ENCODE measurements at regions of chr15 and their contacts with region 1.

Region 1: DNA sequence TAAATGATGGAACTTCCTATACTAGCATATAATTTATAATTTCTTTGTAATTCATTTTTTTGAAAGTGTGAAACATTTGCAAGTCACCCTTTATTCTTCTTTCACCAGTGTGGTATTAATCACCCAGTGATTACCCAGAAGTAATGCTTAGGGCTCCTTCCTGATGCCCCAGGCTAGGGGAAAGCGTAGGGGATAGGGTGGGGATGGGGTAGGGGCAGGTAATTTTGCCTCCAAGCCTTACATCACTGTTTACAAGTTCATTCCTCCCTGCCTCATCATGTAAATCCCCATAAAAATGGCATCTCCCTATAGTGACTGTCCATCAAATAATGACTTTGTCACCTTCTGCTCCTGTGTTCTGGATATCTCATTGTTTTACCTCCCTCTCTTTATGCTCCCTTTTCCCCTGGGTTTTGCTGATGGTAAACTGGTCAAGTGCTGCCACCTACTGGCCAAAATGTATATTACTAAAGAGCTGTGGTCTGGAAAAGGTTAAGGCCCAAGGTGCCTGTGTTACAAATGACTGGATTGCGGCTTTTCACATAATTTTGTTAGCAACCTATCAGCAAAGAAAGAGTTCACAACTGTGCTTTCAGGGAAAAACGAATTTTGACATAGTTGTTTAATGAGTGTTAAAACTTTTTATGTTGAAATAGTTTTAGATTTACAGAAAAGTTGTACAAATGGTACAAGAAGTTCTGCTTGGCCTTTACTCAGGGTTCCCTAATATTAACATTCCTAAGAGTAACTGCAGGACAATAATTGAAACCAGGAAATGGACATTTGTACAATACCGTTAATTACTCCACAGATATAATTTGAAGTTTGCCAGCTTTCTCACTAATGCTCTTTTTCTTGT is 54.7 kb downstream of the ONECUT1 start:
- DNase-seq: peak; percentile 88
- ATAC-seq: peak; percentile 86
- H3K4me3 ChIP-seq: no peak overlapping the region
- H3K4me3 Mint-ChIP-seq: no peak overlapping the region
- H3K27ac ChIP-seq: no peak overlapping the region
- H3K27ac Mint-ChIP-seq: no peak overlapping the region
- H3K4me1 ChIP-seq: peaks cover 12 to 14% of the 10 kb centered on the region in 2 donors
- H3K4me1 Mint-ChIP-seq: peaks cover 14% of the 10 kb centered on the region
- H3K27me3 ChIP-seq: no peaks in the 10 kb centered on the region
- H3K27me3 Mint-ChIP-seq: peaks cover 4% of the 10 kb centered on the region
- CTCF ChIP-seq: peak; percentile 96

Region 2: DNA sequence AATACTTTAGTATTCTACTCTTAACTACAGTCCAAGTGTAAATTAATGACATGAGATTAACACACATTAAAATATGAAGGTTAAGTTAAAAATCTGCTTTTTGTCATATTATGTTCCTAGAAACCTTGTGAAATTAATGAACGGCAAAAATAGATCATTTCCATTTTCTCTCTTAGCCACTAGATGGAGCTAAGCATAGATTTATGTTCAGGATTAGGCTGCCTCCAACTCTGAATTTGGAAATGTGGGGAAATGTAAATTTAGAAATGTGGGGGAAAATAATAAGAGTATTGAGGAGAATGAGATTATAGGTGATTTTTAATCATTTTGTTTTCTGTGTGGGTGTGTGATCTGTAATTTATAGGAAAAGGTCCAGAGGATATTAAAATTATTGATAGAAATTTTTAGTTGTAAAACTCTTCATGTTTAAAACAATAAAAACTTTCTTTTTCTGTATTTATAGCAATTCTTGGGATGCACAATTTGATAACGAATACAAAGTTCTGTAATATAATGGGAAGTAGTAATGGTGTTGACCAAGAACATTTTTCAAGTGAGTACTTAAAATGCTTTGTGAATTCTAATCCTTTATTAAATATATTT is 846.8 kb before region 1 on chr15:
- CTCF ChIA-PET with region 1: interaction called, 3 read pairs
- POLR2A ChIA-PET with region 1: no interaction called
- intact Hi-C with region 1: loop called (anchors 1 kb)
- DNase-seq: peak; percentile 35
- ATAC-seq: no peak
- H3K4me3 ChIP-seq: no peak overlapping the region
- H3K4me3 Mint-ChIP-seq: no peak overlapping the region
- H3K27ac ChIP-seq: no peak overlapping the region
- H3K27ac Mint-ChIP-seq: no peak overlapping the region
- H3K4me1 ChIP-seq: no peaks in the 10 kb centered on the region
- H3K4me1 Mint-ChIP-seq: peaks cover 5% of the 10 kb centered on the region
- H3K27me3 ChIP-seq: no peaks in the 10 kb centered on the region
- H3K27me3 Mint-ChIP-seq: no peaks in the 10 kb centered on the region
- CTCF ChIP-seq: peak; percentile 92

Region 3: DNA sequence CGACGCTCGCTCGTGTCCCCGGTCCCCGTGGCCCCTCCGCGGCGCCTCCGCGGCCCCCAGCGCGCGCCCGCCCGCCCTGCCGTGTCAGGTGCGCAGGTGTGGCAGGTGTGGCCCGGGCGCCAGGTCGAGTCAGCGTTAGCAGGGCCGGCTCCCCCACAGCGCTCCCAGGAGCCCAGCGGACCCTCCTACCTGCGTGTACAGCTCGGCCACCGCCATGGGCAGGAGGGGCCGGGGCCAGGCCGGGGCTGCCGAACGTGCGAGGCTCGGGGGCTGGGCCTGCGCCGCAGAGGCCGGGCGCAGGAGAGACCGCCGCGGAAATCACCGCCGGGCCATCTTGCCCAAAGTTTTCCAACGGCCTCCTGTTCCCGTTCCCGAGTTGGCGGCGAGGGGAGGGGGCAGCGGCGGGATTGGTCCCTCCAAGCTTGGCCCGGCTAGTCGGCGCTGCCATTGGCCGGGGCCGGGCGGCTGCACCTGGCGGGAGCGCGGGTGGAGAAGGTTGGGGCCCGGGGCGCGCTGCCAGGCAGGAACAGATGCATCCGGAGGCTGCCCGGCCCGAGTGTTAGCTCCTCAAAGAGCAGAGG is 439.9 kb before region 1 on chr15 and contains the start of gene MYO5C:
- CTCF ChIA-PET with region 1: no interaction called
- POLR2A ChIA-PET with region 1: no interaction called
- intact Hi-C with region 1: no loop called
- DNase-seq: peak; percentile 37
- ATAC-seq: peak; percentile 46
- H3K4me3 ChIP-seq: peak within 1 kb of the TSS in 4 of 5 experiments; percentile 25 to 59 (median 54)
- H3K4me3 Mint-ChIP-seq: peak within 1 kb of the TSS; percentile 73
- H3K27ac ChIP-seq: no peak within 1 kb of the TSS
- H3K27ac Mint-ChIP-seq: no peak within 1 kb of the TSS
- H3K4me1 ChIP-seq: peaks cover 15 to 41% of the 10 kb centered on the region in 2 donors
- H3K4me1 Mint-ChIP-seq: peaks cover 35% of the 10 kb centered on the region
- H3K27me3 ChIP-seq: peaks cover 0 to 22% (median 16%) of the 10 kb centered on the region in 4 experiments
- H3K27me3 Mint-ChIP-seq: peaks cover 17% of the 10 kb centered on the region
- CTCF ChIP-seq: no peak
- total RNA-seq, gene MYO5C: 3.2 and 4.5 TPM in 2 replicates

Region 4: DNA sequence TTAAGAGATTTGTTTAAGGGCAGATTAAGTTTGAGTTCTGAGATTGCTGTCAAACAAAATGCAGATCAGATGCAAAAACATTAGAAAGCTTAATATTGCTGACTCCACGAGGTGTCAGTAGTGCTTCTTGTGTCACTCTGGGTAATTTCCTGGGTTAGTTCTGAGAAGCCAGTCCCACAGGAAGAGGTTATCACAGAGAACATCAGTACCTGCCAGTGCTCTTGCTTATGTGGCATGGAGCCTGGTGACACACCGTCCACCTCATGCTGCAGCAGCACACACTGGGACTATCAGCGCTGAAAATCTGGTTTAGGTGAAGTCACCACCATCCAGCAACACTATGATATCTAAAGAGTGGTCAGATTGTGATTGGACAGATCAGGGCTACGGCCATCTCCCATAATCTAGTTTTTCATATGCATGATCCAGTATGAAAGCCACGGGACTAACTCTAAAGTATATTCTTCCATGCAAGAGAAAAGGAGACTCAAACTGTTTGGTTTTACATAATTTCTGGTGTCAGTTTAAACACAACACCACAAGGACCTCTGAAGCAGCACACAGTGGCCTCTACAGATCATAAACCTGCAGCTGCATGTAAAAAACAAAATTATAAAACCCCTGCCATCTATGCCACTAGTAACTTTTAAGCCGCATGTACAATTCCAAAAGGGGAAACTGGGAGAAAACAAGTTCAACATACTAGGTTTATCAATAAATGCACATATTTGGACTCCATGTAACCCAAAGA is 403.8 kb before region 1 on chr15:
- CTCF ChIA-PET with region 1: interaction called, 45 read pairs
- POLR2A ChIA-PET with region 1: no interaction called
- intact Hi-C with region 1: loop called (anchors 1 kb)
- DNase-seq: peak; percentile 67
- ATAC-seq: peak; percentile 90
- H3K4me3 ChIP-seq: no peak overlapping the region
- H3K4me3 Mint-ChIP-seq: no peak overlapping the region
- H3K27ac ChIP-seq: peak overlapping the region in 1 of 2 donors; percentile 20
- H3K27ac Mint-ChIP-seq: peak overlapping the region; percentile 74
- H3K4me1 ChIP-seq: peaks cover 7 to 8% of the 10 kb centered on the region in 2 donors
- H3K4me1 Mint-ChIP-seq: peaks cover 10% of the 10 kb centered on the region
- H3K27me3 ChIP-seq: no peaks in the 10 kb centered on the region
- H3K27me3 Mint-ChIP-seq: no peaks in the 10 kb centered on the region
- CTCF ChIP-seq: peak; percentile 66

Region 5: DNA sequence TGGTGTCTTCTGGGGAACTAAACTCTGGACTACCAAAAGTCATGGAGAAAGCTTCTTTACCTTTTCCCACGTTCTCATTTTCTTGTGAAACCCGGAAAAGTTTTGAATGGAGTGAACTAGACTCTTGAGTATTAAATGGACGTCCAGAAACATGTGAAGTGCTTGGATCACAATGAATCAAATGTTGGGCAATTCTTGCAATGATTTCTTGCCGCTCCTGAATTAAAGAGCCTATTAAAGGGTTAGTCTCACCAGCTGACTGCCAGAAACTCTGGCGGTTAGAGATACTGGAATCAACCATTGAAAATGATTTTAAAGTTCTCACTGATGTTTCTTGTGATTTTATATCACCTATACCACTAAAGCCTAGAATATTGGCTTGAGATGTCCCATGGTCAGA is 125.9 kb before region 1 on chr15:
- CTCF ChIA-PET with region 1: interaction called, 8 read pairs
- POLR2A ChIA-PET with region 1: no interaction called
- intact Hi-C with region 1: loop called (anchors 5 kb)
- DNase-seq: no peak
- ATAC-seq: no peak
- H3K4me3 ChIP-seq: no peak overlapping the region
- H3K4me3 Mint-ChIP-seq: no peak overlapping the region
- H3K27ac ChIP-seq: no peak overlapping the region
- H3K27ac Mint-ChIP-seq: no peak overlapping the region
- H3K4me1 ChIP-seq: peaks cover 4 to 5% of the 10 kb centered on the region in 2 donors
- H3K4me1 Mint-ChIP-seq: peaks cover 18% of the 10 kb centered on the region
- H3K27me3 ChIP-seq: no peaks in the 10 kb centered on the region
- H3K27me3 Mint-ChIP-seq: no peaks in the 10 kb centered on the region
- CTCF ChIP-seq: no peak

Region 6: GRCh38 chr15:52651868-52652267 is 83.6 kb before region 1 on chr15:
- CTCF ChIA-PET with region 1: interaction called, 23 read pairs
- POLR2A ChIA-PET with region 1: no interaction called
- intact Hi-C with region 1: no loop called
- DNase-seq: peak; percentile 49
- ATAC-seq: peak; percentile 97
- H3K4me3 ChIP-seq: no peak overlapping the region
- H3K4me3 Mint-ChIP-seq: no peak overlapping the region
- H3K27ac ChIP-seq: peak overlapping the region in 1 of 2 donors; percentile 5
- H3K27ac Mint-ChIP-seq: peak overlapping the region; percentile 53
- H3K4me1 ChIP-seq: peaks cover 0 to 4% of the 10 kb centered on the region in 2 donors
- H3K4me1 Mint-ChIP-seq: peaks cover 21% of the 10 kb centered on the region
- H3K27me3 ChIP-seq: no peaks in the 10 kb centered on the region
- H3K27me3 Mint-ChIP-seq: no peaks in the 10 kb centered on the region
- CTCF ChIP-seq: no peak

Region 7: GRCh38 chr15:52657338-52657737 is 78.1 kb before region 1 on chr15:
- CTCF ChIA-PET with region 1: interaction called, 23 read pairs
- POLR2A ChIA-PET with region 1: no interaction called
- intact Hi-C with region 1: no loop called
- DNase-seq: no peak
- ATAC-seq: no peak
- H3K4me3 ChIP-seq: no peak overlapping the region
- H3K4me3 Mint-ChIP-seq: no peak overlapping the region
- H3K27ac ChIP-seq: no peak overlapping the region
- H3K27ac Mint-ChIP-seq: no peak overlapping the region
- H3K4me1 ChIP-seq: no peaks in the 10 kb centered on the region
- H3K4me1 Mint-ChIP-seq: peaks cover 23% of the 10 kb centered on the region
- H3K27me3 ChIP-seq: no peaks in the 10 kb centered on the region
- H3K27me3 Mint-ChIP-seq: no peaks in the 10 kb centered on the region
- CTCF ChIP-seq: no peak